ENCODE measurements at regions of chr5 and their contacts with region 1.

Region 1: DNA sequence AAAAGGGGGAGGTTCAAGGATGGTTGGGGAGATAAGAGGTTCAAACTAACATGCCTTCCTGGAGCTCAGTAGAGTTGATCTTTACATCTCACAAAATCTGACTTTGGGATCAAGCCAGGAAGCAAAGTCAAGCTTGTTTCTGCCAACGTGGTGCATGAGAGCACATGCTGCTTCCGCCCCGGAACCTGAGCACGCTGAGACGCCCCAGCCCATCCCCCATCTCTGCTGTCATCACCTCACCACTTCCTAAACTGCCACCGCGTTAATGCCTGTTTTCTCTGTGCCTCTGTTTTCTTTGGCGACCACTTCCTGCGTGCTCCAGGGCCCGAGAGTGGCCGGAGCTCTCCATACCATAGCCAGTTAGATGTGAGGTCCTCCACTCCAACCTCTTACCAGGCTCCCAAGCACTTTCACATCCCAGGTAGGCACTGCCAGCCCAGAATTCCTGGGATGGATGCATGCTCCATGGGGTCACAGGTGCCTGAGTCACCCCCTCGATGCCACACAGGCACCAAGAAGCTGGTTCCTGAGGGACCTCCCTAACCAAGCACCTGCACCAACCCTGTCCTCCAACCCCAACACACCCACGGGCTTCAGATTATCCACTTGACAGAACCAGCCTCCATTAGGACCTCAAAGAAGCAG is 31.2 kb upstream of the AFAP1L1 start:
- DNase-seq: no peak
- H3K4me3 ChIP-seq: no peak overlapping the region
- H3K27ac ChIP-seq: no peak overlapping the region
- H3K4me1 ChIP-seq: no peaks in the 10 kb centered on the region
- H3K27me3 ChIP-seq: no peaks in the 10 kb centered on the region; a peak in 1 of 7 replicates
- CTCF ChIP-seq: no peak
- EP300 ChIP-seq: no peak
- POLR2A ChIP-seq: no peak
- RAD21 ChIP-seq: no peak

Region 2: GRCh38 chr5:149128023-149128875 is 112.2 kb before region 1 on chr5:
- CTCF ChIA-PET with region 1: interaction called, 22 read pairs
- POLR2A ChIA-PET with region 1: no interaction called
- DNase-seq: peak in 1 of 2 experiments; percentile 66
- H3K4me3 ChIP-seq: no peak overlapping the region
- H3K27ac ChIP-seq: no peak overlapping the region
- H3K4me1 ChIP-seq: peaks cover 0 to 9% (median 0%) of the 10 kb centered on the region in 4 experiments; a peak in 3 of 7 replicates
- H3K27me3 ChIP-seq: no peaks in the 10 kb centered on the region
- CTCF ChIP-seq: peak; percentile 76 to 84 (median 84)
- EP300 ChIP-seq: no peak
- POLR2A ChIP-seq: no peak
- RAD21 ChIP-seq: peak; percentile 56 to 64

Region 3: GRCh38 chr5:149141224-149141956 is 99.1 kb before region 1 on chr5 and contains the start of gene ABLIM3:
- CTCF ChIA-PET with region 1: interaction called, 29 read pairs
- POLR2A ChIA-PET with region 1: no interaction called
- DNase-seq: peak; percentile 29 to 95
- H3K4me3 ChIP-seq: peak within 1 kb of the TSS; percentile 24 to 75 (median 51)
- H3K27ac ChIP-seq: no peak within 1 kb of the TSS
- H3K4me1 ChIP-seq: peaks cover 0 to 3% (median 0%) of the 10 kb centered on the region in 4 experiments; a peak in 1 of 7 replicates
- H3K27me3 ChIP-seq: peaks cover 0 to 21% (median 15%) of the 10 kb centered on the region in 4 experiments; a peak in 6 of 7 replicates
- CTCF ChIP-seq: peak; percentile 90 to 94 (median 93)
- EP300 ChIP-seq: no peak
- POLR2A ChIP-seq: no peak
- RAD21 ChIP-seq: peak; percentile 59 to 68
- total RNA-seq, gene ABLIM3: 0.56 and 0.69 TPM in 2 replicates

Region 4: GRCh38 chr5:149212198-149212951 is 28.1 kb before region 1 on chr5:
- CTCF ChIA-PET with region 1: interaction called, 46 read pairs
- POLR2A ChIA-PET with region 1: no interaction called
- DNase-seq: no peak
- H3K4me3 ChIP-seq: no peak overlapping the region
- H3K27ac ChIP-seq: no peak overlapping the region
- H3K4me1 ChIP-seq: no peaks in the 10 kb centered on the region
- H3K27me3 ChIP-seq: no peaks in the 10 kb centered on the region; a peak in 1 of 7 replicates
- CTCF ChIP-seq: no peak
- EP300 ChIP-seq: no peak
- POLR2A ChIP-seq: no peak
- RAD21 ChIP-seq: no peak

Region 5: GRCh38 chr5:149222914-149223848 is 17.3 kb before region 1 on chr5:
- CTCF ChIA-PET with region 1: interaction called, 46 read pairs
- POLR2A ChIA-PET with region 1: no interaction called
- DNase-seq: no peak
- H3K4me3 ChIP-seq: no peak overlapping the region
- H3K27ac ChIP-seq: no peak overlapping the region
- H3K4me1 ChIP-seq: no peaks in the 10 kb centered on the region
- H3K27me3 ChIP-seq: no peaks in the 10 kb centered on the region
- CTCF ChIP-seq: no peak
- EP300 ChIP-seq: no peak
- POLR2A ChIP-seq: no peak
- RAD21 ChIP-seq: no peak

Region 6: GRCh38 chr5:149254506-149254905 is 14.0 kb after region 1 on chr5:
- CTCF ChIA-PET with region 1: interaction called, 99 read pairs
- POLR2A ChIA-PET with region 1: no interaction called
- DNase-seq: peak in 1 of 2 experiments; percentile 52
- H3K4me3 ChIP-seq: no peak overlapping the region
- H3K27ac ChIP-seq: no peak overlapping the region
- H3K4me1 ChIP-seq: no peaks in the 10 kb centered on the region; a peak in 1 of 7 replicates
- H3K27me3 ChIP-seq: 0 out of 7 replicates have a peak, but pooled peaks cover 0 to 2% (median 0%) of the 10 kb centered on the region in 4 experiments
- CTCF ChIP-seq: no peak
- EP300 ChIP-seq: no peak
- POLR2A ChIP-seq: no peak
- RAD21 ChIP-seq: no peak

Region 7: DNA sequence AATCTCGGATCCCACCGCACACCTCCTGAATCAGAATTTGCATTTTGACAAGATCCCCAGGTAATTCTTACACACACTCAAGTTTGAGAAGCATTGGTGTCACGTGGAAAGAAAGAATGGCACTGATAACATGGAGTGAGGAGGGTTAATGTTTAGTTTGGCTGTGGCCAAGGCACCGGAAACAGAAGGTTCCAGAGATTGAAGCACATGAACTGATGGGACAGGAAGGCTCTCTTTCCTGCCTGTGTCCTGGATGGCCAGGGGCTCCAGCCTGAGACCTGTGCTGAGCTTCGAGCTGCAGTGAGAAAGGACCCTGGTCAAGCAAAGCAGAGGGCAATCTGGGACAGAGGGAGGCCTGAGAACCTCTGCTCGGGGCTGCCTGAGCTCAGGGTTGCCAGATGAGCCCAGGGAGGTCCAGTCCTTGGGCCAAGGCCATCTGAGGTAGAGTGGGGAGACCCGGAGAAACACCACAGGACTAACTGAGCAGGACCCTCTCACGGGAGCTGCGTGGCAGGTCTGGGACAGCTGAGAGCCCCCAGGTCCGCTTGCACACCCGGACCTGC is 58.4 kb after region 1 on chr5:
- CTCF ChIA-PET with region 1: no interaction called
- POLR2A ChIA-PET with region 1: no interaction called
- DNase-seq: no peak
- H3K4me3 ChIP-seq: no peak overlapping the region
- H3K27ac ChIP-seq: no peak overlapping the region
- H3K4me1 ChIP-seq: peaks cover 0 to 6% (median 2%) of the 10 kb centered on the region in 4 experiments; a peak in 3 of 7 replicates
- H3K27me3 ChIP-seq: no peaks in the 10 kb centered on the region
- CTCF ChIP-seq: no peak
- EP300 ChIP-seq: no peak
- POLR2A ChIP-seq: no peak
- RAD21 ChIP-seq: no peak

Measured in H1 (cell line).